ENCODE measurements at regions of chr9 and their contacts with region 1.

Region 1: DNA sequence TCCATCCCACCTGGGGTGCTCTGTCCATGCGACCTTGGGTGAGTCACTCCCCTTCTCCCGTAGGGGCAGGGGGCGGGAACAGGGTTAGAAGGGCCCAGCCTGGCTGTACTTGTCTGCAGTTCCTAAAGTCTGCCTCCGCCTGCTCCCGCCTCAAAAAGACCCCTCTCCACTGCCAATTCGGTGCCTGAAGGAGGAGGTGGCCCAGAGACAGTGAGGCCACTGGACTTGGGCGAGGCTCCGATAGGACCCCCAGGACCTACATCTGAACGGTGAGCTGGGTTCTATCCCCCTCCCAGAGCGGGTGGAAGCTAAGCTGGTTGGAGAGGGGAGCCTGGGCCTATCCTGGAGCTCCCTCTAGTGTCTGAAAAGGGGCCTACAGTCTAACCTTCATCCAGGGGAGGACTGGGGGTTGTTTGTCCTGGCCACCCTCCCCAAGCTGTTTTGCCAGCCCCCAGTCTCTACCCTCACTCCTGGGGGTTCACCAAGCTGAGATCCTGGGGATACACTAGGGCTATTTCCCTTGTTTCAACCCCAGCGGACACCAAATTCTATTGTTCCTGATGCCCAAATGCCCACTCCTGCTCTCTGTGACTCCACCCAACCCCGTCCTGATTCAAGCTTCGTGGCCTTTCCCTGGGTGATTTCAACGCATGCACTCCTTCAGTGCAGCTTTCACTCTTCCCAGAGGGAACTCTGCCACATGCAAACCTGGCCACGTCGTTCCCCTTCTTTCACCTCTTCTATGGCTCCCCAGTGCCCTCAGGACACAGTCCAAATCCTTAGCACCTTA is 6.1 kb upstream of the CRB2 start:
- DNase-seq: no peak

Region 2: GRCh38 chr9:123081824-123082223 is 268.1 kb before region 1 on chr9:
- intact Hi-C with region 1: loop called in 1 of 2 experiments (anchors 5 kb)
- DNase-seq: no peak

Region 3: DNA sequence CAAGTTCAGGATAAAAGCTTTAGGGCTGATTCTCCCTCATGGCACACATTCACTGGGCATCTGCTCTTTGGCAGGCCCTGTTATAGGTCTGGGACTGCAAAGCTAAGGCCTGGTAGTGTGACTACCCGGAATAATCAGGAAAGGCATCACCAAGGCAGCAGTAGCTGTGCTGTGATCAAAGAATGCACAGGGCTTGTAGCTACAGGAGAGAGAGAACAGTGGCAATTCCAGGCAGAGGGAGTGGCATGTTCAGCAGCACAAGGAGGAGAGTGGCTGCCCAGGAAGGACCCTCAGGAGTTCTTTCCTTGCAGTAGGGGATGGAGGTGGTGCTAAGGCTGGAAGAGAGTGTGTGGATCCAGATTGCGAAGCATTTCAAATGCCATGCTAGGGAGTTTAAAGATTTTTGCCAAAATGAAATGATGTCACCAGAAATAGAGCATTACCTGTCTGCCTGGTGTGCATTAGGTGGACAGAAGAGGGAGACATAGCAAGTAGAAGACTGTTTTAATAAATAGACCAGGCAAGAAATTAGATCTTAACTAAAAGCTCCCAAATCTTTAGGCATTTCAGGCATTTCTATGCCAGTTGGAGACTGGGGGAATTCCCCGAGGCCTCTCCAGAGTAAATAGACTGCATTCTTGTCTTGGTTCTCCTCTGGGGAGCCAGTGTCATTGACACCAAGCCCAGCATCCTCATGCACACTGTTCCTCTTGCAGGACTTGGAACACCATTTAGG is 247.3 kb before region 1 on chr9:
- intact Hi-C with region 1: loop called (anchors 5 to 10 kb)
- DNase-seq: no peak

Measured in posterior vena cava (tissue), 2 donors.